ENCODE measurements at regions of chr19 and their contacts with region 1.

Region 1: GRCh38 chr19:38869856-38870607 is 8.0 kb downstream of the RINL start:
- DNase-seq: peak; percentile 97
- ATAC-seq: peak; percentile 87
- H3K4me3 ChIP-seq: peak overlapping the region; percentile 70 to 97 (median 86)
- H3K4me3 Mint-ChIP-seq: peak overlapping the region; percentile 95
- H3K27ac ChIP-seq: peak overlapping the region; percentile 72 to 76
- H3K27ac Mint-ChIP-seq: peak overlapping the region; percentile 92
- H3K4me1 ChIP-seq: peaks cover 39 to 53% of the 10 kb centered on the region in 2 donors
- H3K4me1 Mint-ChIP-seq: peaks cover 54% of the 10 kb centered on the region
- H3K27me3 ChIP-seq: no peaks in the 10 kb centered on the region
- H3K27me3 Mint-ChIP-seq: no peaks in the 10 kb centered on the region
- CTCF ChIP-seq: peak; percentile 86

Region 2: GRCh38 chr19:38769635-38770211 is 100.3 kb before region 1 on chr19:
- CTCF ChIA-PET with region 1: interaction called, 9 read pairs
- POLR2A ChIA-PET with region 1: interaction called, 13 read pairs
- intact Hi-C with region 1: loop called (anchors 5 kb)
- DNase-seq: peak; percentile 95
- ATAC-seq: peak; percentile 91
- H3K4me3 ChIP-seq: peak overlapping the region in 4 of 5 experiments; percentile 40 to 59 (median 47)
- H3K4me3 Mint-ChIP-seq: peak overlapping the region; percentile 81
- H3K27ac ChIP-seq: peak overlapping the region; percentile 75 to 77
- H3K27ac Mint-ChIP-seq: peak overlapping the region; percentile 89
- H3K4me1 ChIP-seq: peaks cover 6 to 12% of the 10 kb centered on the region in 2 donors
- H3K4me1 Mint-ChIP-seq: peaks cover 11% of the 10 kb centered on the region
- H3K27me3 ChIP-seq: no peaks in the 10 kb centered on the region
- H3K27me3 Mint-ChIP-seq: no peaks in the 10 kb centered on the region
- CTCF ChIP-seq: peak; percentile 86

Region 3: DNA sequence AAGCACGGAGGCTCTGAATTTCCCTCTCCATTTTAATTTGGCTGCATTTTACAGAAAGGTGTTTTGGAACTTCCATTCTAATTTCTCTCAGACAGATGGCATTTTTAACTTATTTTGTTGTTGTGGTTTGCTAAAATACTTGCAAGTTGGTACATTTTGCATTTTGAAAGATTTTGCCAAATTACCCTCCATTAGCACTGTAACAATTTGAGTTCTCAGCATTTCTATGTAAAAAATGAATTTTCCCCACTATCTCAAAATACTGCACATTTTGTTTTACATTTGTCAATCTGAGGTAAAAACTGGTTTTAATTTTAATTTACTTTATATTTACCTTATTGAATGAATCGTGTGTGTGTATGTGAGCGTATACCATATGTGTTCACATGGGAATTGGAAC is 13.2 kb before region 1 on chr19:
- CTCF ChIA-PET with region 1: interaction called, 62 read pairs
- POLR2A ChIA-PET with region 1: interaction called, 237 read pairs
- intact Hi-C with region 1: no loop called
- DNase-seq: no peak
- ATAC-seq: no peak
- H3K4me3 ChIP-seq: no peak overlapping the region
- H3K4me3 Mint-ChIP-seq: peak overlapping the region; percentile 78
- H3K27ac ChIP-seq: peak overlapping the region; percentile 17 to 60
- H3K27ac Mint-ChIP-seq: peak overlapping the region; percentile 93
- H3K4me1 ChIP-seq: peaks cover 35 to 63% of the 10 kb centered on the region in 2 donors
- H3K4me1 Mint-ChIP-seq: peaks cover 51% of the 10 kb centered on the region
- H3K27me3 ChIP-seq: no peaks in the 10 kb centered on the region
- H3K27me3 Mint-ChIP-seq: no peaks in the 10 kb centered on the region
- CTCF ChIP-seq: no peak

Region 4: GRCh38 chr19:38899447-38900219 is 29.6 kb after region 1 on chr19 and contains the starts of genes NFKBIB and SIRT2:
- CTCF ChIA-PET with region 1: interaction called, 5 read pairs
- POLR2A ChIA-PET with region 1: interaction called, 6 read pairs
- intact Hi-C with region 1: loop called (anchors 2 kb)
- DNase-seq: peak; percentile 100
- ATAC-seq: peak; percentile 89
- H3K4me3 ChIP-seq: peak within 1 kb of the TSS; percentile 85 to 95 (median 92)
- H3K4me3 Mint-ChIP-seq: peak within 1 kb of the TSS; percentile 96
- H3K27ac ChIP-seq: peak within 1 kb of the TSS; percentile 89 to 99
- H3K27ac Mint-ChIP-seq: peak within 1 kb of the TSS; percentile 94
- H3K4me1 ChIP-seq: peaks cover 20 to 30% of the 10 kb centered on the region in 2 donors
- H3K4me1 Mint-ChIP-seq: peaks cover 38% of the 10 kb centered on the region
- H3K27me3 ChIP-seq: no peaks in the 10 kb centered on the region
- H3K27me3 Mint-ChIP-seq: no peaks in the 10 kb centered on the region
- CTCF ChIP-seq: no peak
- total RNA-seq, gene NFKBIB: 30.3 and 31.5 TPM in 2 replicates
- total RNA-seq, gene SIRT2: 41.8 and 42.4 TPM in 2 replicates

Region 5: GRCh38 chr19:39397360-39398296 is 527.6 kb after region 1 on chr19:
- CTCF ChIA-PET with region 1: no interaction called
- POLR2A ChIA-PET with region 1: no interaction called
- intact Hi-C with region 1: loop called (anchors 10 kb)
- DNase-seq: peak; percentile 92
- ATAC-seq: peak; percentile 50
- H3K4me3 ChIP-seq: peak overlapping the region in 4 of 5 experiments; percentile 1 to 21 (median 13)
- H3K4me3 Mint-ChIP-seq: peak overlapping the region; percentile 70
- H3K27ac ChIP-seq: peak overlapping the region; percentile 90 to 100
- H3K27ac Mint-ChIP-seq: peak overlapping the region; percentile 96
- H3K4me1 ChIP-seq: peaks cover 49 to 57% of the 10 kb centered on the region in 2 donors
- H3K4me1 Mint-ChIP-seq: peaks cover 65% of the 10 kb centered on the region
- H3K27me3 ChIP-seq: no peaks in the 10 kb centered on the region
- H3K27me3 Mint-ChIP-seq: no peaks in the 10 kb centered on the region
- CTCF ChIP-seq: peak; percentile 94

Measured in B cell (primary cell).